Calu3 (cell line): ENCODE measurements at regions of chr2 and their contacts with region 1.

Region 1: DNA sequence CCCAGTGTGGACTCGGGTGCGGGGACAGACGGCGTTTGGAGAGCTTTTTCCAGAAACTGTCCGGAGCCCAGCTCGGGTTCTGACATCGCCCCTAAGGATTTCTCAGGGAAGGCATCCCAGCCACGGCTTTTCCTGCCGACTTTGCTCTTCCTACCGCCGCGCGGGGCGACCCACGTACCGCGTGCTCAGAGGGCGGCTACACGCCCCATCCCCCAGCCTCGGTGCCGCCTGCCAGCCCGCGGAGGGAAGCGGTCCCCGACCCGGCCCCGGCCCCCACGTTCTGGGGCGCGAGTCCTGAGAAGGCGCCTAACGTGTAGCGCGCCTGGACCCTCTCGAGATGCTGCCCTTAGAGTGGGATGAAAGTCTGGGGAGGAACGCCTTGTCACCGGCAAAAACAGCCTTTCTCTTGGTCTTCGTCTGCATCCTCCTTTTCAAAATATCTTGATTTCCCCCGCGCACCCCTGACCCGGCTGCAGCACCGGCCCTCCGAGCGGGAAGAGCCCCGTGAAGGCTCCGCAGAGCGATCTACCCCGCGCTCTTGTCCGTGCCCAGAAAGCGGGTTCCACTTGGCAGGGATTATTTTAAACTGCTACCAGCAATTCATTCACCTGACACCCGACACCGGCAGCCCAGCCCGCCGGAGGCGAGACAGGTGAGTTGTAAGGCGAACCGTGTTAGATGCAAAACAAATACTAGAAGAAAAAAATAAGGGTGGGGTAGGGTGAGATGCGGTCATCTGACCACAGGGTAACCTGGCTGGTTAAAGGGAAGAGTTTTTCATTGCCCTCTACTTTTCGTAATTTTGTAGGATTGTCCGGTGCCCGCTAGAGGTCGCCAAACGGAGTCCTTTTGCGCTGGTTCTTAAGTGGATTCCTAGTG is 812 bp upstream of the KCNG3 start:
- DNase-seq: peak; percentile 88
- H3K4me3 Mint-ChIP-seq: peak overlapping the region; percentile 77
- H3K27ac Mint-ChIP-seq: peak overlapping the region; percentile 12
- H3K4me1 Mint-ChIP-seq: no peaks in the 10 kb centered on the region
- H3K27me3 Mint-ChIP-seq: no peaks in the 10 kb centered on the region
- CTCF ChIP-seq: peak; percentile 73

Region 2: GRCh38 chr2:42224422-42225067 is 270.0 kb before region 1 on chr2:
- CTCF ChIA-PET with region 1: no interaction called
- intact Hi-C with region 1: loop called (anchors 5 kb)
- DNase-seq: no peak
- H3K4me3 Mint-ChIP-seq: no peak overlapping the region
- H3K27ac Mint-ChIP-seq: no peak overlapping the region
- H3K4me1 Mint-ChIP-seq: peaks cover 22% of the 10 kb centered on the region
- H3K27me3 Mint-ChIP-seq: no peaks in the 10 kb centered on the region
- CTCF ChIP-seq: no peak

Region 3: GRCh38 chr2:42360890-42361727 is 133.5 kb before region 1 on chr2 and contains the start of gene COX7A2L:
- CTCF ChIA-PET with region 1: no interaction called
- intact Hi-C with region 1: loop called (anchors 10 kb)
- DNase-seq: peak; percentile 97
- H3K4me3 Mint-ChIP-seq: peak within 1 kb of the TSS; percentile 83
- H3K27ac Mint-ChIP-seq: peak within 1 kb of the TSS; percentile 71
- H3K4me1 Mint-ChIP-seq: peaks cover 26% of the 10 kb centered on the region
- H3K27me3 Mint-ChIP-seq: no peaks in the 10 kb centered on the region
- CTCF ChIP-seq: no peak
- total RNA-seq, gene COX7A2L: 97.5 and 98.0 TPM in 2 replicates

Region 4: DNA sequence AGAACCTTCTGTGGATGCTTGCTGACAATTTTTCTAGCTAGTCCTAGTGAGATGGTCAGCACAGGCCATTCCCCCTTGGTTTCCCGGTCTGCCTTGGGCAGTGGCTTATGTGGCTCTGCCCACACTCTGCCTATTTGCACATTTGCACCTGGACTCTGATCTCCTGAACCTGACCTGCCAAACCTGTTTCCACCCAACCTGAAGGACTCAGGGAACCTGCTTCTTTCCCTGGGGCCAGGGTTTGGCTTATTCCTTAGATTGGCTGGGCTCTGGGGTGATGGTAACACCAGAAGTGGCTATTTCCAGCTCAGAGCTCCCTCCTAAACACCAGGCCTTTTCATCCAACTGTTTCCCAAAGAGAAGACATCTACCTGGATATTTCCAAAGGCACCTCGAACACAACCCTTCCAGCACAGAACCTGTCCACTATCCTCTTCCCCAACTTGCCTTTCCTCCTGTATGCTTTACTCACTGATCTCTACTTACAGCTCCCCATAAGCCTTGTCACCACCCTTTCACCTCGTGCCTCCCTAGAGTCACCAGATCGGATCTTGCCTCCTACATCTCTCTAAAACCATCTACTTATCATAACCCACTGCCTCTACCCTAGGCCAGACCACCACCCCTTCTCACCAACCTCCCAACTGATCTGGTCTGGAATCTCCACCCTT is 68.0 kb after region 1 on chr2:
- CTCF ChIA-PET with region 1: no interaction called
- intact Hi-C with region 1: loop called (anchors 5 kb)
- DNase-seq: peak; percentile 80
- H3K4me3 Mint-ChIP-seq: peak overlapping the region; percentile 26
- H3K27ac Mint-ChIP-seq: peak overlapping the region; percentile 90
- H3K4me1 Mint-ChIP-seq: peaks cover 42% of the 10 kb centered on the region
- H3K27me3 Mint-ChIP-seq: no peaks in the 10 kb centered on the region
- CTCF ChIP-seq: no peak

Region 5: GRCh38 chr2:42663106-42663780 is 168.6 kb after region 1 on chr2:
- CTCF ChIA-PET with region 1: no interaction called
- intact Hi-C with region 1: loop called (anchors 1 kb)
- DNase-seq: peak; percentile 62
- H3K4me3 Mint-ChIP-seq: no peak overlapping the region
- H3K27ac Mint-ChIP-seq: no peak overlapping the region
- H3K4me1 Mint-ChIP-seq: no peaks in the 10 kb centered on the region
- H3K27me3 Mint-ChIP-seq: no peaks in the 10 kb centered on the region
- CTCF ChIP-seq: peak; percentile 88